ENCODE measurements at regions of chr20 and their contacts with region 1.

Region 1: GRCh38 chr20:34069341-34070078 is 42.5 kb downstream of the EIF2S2 start:
- DNase-seq: peak; percentile 46 to 62 (median 52)
- H3K4me3 ChIP-seq: no peak overlapping the region
- H3K4me3 Mint-ChIP-seq: no peak overlapping the region
- H3K27ac ChIP-seq: peak overlapping the region in 1 of 2 donors; percentile 51
- H3K27ac Mint-ChIP-seq: peak overlapping the region in 3 of 7 donors; percentile 10 to 25 (median 18)
- H3K4me1 ChIP-seq: no peaks in the 10 kb centered on the region
- H3K4me1 Mint-ChIP-seq: peaks cover 10% of the 10 kb centered on the region
- H3K27me3 ChIP-seq: no peaks in the 10 kb centered on the region
- H3K27me3 Mint-ChIP-seq: no peaks in the 10 kb centered on the region
- CTCF ChIP-seq: peak; percentile 77

Region 2: GRCh38 chr20:33862709-33863403 is 206.7 kb before region 1 on chr20:
- intact Hi-C with region 1: loop called in 1 of 2 experiments (anchors 5 kb)
- DNase-seq: peak in 1 of 3 donors; percentile 23
- H3K4me3 ChIP-seq: no peak overlapping the region
- H3K4me3 Mint-ChIP-seq: no peak overlapping the region
- H3K27ac ChIP-seq: no peak overlapping the region
- H3K27ac Mint-ChIP-seq: peak overlapping the region in 1 of 7 donors; percentile 46
- H3K4me1 ChIP-seq: peaks cover 14 to 20% of the 10 kb centered on the region in 2 donors
- H3K4me1 Mint-ChIP-seq: peaks cover 21% of the 10 kb centered on the region
- H3K27me3 ChIP-seq: no peaks in the 10 kb centered on the region
- H3K27me3 Mint-ChIP-seq: peaks cover 1 to 2% (median 2%) of the 10 kb centered on the region in 3 donors
- CTCF ChIP-seq: peak; percentile 86

Region 3: DNA sequence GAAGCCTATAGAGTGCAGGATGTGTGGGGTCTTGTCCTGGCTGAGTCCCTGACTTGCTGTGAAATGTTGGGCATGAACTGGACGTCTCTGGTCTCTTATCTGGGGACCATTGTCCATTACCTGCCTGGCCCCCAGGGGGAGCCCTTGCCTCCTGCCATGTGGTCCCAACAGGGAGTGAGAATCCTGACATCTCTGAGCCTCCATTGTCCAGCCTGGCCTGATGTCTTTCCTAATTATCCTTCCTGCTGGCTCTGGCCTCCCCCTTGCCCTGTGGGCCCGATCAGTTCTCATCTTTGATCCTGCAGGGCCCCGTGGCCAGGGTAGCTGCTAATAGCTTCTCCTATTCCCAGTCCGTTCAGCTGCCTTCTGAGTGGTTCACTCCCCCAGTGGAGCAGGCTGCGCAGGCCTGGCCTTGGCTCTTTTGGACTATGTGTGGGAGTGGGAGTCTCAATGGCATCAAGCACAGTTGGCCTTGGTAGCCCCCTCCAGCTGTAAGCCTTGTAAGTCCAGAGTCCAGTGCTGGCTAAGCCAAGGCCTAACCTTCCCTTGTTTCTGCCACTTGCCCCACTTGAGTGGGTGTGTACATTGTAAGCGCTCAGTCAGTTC is 153.7 kb before region 1 on chr20:
- intact Hi-C with region 1: loop called in 1 of 2 experiments (anchors 5 kb)
- DNase-seq: peak; percentile 36 to 53 (median 49)
- H3K4me3 ChIP-seq: no peak overlapping the region
- H3K4me3 Mint-ChIP-seq: no peak overlapping the region
- H3K27ac ChIP-seq: no peak overlapping the region
- H3K27ac Mint-ChIP-seq: no peak overlapping the region
- H3K4me1 ChIP-seq: peaks cover 13% of the 10 kb centered on the region in 2 donors
- H3K4me1 Mint-ChIP-seq: peaks cover 33% of the 10 kb centered on the region
- H3K27me3 ChIP-seq: no peaks in the 10 kb centered on the region
- H3K27me3 Mint-ChIP-seq: peaks cover 3 to 9% (median 6%) of the 10 kb centered on the region in 3 donors
- CTCF ChIP-seq: peak; percentile 77

Region 4: DNA sequence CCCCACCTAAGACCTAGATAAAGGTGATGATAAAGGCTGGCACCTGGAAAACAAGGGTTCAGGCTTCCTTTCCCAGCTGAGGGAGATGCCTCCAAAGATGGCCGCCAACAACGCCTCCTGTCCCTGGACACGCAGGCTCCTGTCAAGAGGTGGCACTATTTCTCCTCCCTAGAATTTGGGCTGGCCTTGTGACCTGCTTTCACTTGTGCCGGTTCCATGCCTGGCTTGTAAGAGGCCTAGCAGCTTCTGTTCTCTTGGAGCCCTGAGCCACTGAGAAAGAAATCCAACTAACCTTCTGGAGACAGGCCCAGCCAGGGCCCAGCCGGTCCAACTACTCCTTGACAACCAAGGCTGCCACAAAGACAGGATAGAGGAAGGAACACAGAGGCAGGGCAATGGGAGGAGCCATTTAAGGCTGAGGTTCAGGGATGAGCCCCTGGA is 136.0 kb before region 1 on chr20:
- intact Hi-C with region 1: loop called in 1 of 2 experiments (anchors 10 kb)
- DNase-seq: peak; percentile 37 to 62 (median 43)
- H3K4me3 ChIP-seq: no peak overlapping the region
- H3K4me3 Mint-ChIP-seq: no peak overlapping the region
- H3K27ac ChIP-seq: no peak overlapping the region
- H3K27ac Mint-ChIP-seq: no peak overlapping the region
- H3K4me1 ChIP-seq: no peaks in the 10 kb centered on the region
- H3K4me1 Mint-ChIP-seq: peaks cover 2% of the 10 kb centered on the region
- H3K27me3 ChIP-seq: no peaks in the 10 kb centered on the region
- H3K27me3 Mint-ChIP-seq: peaks cover under 1 to 10% (median under 1%) of the 10 kb centered on the region in 3 donors
- CTCF ChIP-seq: peak; percentile 42